ENCODE measurements at regions of chr6 and their contacts with region 1.

Region 1: DNA sequence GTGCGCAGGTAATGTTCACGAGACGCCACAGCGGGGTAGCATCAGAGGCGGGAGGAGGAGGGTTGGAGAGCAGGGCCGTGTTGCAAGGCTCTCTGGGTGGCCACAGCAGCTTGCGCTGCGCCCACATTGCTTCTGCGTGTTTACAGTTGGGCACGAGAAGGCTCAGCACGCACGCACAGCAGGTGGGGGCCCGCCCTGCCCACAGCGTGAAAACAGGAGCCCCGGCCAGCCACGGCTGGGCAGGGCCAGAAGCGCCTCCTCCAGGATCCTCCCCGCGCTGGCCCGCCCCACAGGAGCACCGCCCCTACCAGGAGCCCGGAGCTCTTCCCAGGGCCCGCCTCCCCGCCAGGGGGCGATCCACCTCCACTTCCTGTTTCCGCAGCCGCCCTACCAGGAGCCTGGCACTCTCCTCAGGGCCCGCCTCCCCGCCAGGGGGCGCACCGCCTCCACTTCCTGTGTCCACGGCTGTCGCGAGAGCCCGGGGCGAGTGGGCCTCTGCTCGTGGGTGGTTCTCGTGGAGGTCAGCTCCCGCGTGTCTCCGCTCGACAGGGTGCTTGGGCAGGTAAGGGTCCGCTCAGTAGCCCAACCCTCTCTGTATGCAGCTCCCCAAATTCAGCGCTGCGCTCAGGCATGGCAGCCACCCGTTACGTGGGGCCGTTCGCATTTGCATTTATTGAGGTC is at the start of gene FAM50B:
- DNase-seq: no peak
- H3K4me3 ChIP-seq: peak within 1 kb of the TSS; percentile 59
- CTCF ChIP-seq: peak; percentile 94

Region 2: DNA sequence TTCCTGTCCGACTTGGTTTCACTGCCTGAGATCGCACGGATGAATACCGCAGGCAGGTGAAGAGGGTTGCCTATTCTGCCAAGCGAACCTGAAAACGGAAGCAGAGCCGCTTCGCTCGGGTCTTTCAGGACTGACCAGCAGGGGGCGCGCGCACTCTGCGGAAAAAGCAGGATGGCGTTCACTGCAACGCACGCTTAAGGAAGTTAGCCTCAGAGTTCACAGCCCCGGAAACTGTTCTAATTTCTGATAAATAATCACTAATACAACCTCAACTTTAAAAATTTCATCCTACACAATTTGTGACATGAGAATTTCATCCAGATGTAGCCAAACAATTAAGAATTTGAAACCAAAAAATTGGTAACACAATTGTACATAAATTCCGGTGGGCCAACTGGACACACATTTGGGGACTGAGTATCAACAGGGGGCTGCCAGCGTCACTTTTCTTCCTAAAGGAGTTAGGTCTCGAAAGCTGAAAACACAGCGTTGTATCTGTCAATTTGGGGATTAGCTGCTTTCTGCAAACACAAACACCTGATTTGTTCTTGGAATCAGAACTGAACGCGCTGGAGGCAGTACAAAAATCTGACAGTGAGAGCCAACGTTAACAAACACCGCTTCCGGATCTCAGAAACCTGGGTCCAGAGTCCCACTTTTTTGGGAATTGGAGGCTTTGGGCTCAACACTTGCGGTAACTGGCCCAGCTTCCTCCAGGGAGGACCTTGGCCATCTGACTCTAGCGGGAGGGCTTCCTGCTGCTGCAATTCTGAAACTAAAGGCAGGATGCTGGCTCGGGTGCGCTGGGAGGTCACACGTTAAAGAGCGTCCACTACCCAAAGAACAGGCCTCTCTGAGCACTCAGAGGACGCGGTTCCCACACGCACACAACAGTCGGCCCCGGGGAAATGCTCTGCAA is 106.4 kb before region 1 on chr6:
- CTCF ChIA-PET with region 1: interaction called, 77 read pairs
- POLR2A ChIA-PET with region 1: interaction called, 27 read pairs
- DNase-seq: no peak
- H3K4me3 ChIP-seq: 0 out of 2 replicates have a peak overlapping the region, but pooled peaks have one; percentile 25
- CTCF ChIP-seq: peak; percentile 87

Region 3: DNA sequence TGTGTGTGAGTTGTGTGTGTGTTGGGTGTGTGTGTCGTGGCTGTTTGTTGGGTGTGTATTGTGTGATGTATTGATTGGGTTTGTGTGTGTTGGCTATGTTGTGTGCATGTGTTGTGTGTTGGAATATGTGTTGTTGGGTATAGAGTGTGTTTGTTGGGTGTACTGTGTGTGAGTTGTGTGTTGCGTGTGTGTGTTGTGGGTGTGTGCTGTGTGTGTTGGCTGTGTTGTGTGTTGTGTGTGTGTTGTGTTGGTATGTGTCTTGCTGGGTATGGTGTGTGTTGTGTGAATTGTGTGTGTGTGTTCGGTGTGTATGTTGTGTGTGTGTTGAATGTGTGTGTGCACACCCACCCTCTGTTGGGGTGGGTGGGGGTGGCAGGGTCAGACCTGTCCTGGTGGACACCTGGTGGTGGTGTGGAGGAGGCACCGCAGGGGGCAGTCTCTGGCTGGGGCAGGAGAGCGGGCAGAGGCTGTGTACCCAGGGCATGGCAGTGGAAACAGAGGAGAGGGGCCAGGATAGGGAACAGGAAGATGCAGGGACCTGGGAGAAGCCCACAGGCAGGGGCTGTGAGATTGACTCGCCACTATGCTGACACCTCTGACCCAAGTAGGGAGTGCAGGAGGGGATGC is 72.1 kb before region 1 on chr6:
- CTCF ChIA-PET with region 1: no interaction called
- POLR2A ChIA-PET with region 1: no interaction called
- DNase-seq: no peak
- H3K4me3 ChIP-seq: no peak overlapping the region
- CTCF ChIP-seq: no peak

Region 4: GRCh38 chr6:3835055-3835731 is 13.9 kb before region 1 on chr6:
- CTCF ChIA-PET with region 1: interaction called, 15 read pairs
- POLR2A ChIA-PET with region 1: no interaction called
- DNase-seq: no peak
- H3K4me3 ChIP-seq: no peak overlapping the region
- CTCF ChIP-seq: no peak

Region 5: GRCh38 chr6:3876101-3876500 is 27.0 kb after region 1 on chr6:
- CTCF ChIA-PET with region 1: interaction called, 36 read pairs
- POLR2A ChIA-PET with region 1: interaction called, 3 read pairs
- DNase-seq: no peak
- H3K4me3 ChIP-seq: no peak overlapping the region
- CTCF ChIP-seq: no peak

Region 6: GRCh38 chr6:3913077-3913957 is 64.3 kb after region 1 on chr6:
- CTCF ChIA-PET with region 1: interaction called, 16 read pairs
- POLR2A ChIA-PET with region 1: no interaction called
- DNase-seq: peak; percentile 97
- H3K4me3 ChIP-seq: no peak overlapping the region
- CTCF ChIP-seq: no peak

Region 7: GRCh38 chr6:3960754-3961361 is 111.8 kb after region 1 on chr6:
- CTCF ChIA-PET with region 1: interaction called, 19 read pairs
- POLR2A ChIA-PET with region 1: no interaction called
- DNase-seq: no peak
- H3K4me3 ChIP-seq: no peak overlapping the region
- CTCF ChIP-seq: no peak

Region 8: DNA sequence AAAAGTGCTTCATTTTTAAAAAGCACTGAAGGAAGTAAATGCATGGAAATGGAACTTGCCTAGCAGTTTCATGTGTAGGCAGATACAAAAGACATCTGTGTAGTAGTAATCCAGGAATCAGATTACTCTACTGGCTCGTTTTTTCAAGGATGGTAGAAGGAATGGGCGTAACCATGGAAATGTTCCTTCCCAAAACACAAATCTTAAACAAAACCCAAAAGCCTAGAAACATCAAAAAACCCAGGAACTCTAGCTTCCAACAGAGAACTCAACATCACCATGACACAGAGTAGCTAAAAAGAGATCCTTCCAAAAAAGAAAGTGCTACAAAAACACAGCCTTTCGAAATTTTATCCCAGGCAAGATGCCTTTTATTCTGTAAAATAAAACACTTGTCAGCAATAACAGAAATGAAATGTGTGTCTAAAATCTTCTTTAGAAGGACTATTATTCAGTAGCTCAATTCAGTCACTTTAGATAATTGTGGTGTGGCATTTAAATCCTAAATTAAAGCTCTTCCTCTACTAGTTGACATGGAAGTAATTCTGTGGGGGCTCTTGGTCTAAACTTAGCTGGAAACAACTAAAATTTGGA is 148.2 kb after region 1 on chr6:
- CTCF ChIA-PET with region 1: interaction called, 21 read pairs
- POLR2A ChIA-PET with region 1: no interaction called
- DNase-seq: no peak
- H3K4me3 ChIP-seq: no peak overlapping the region
- CTCF ChIP-seq: no peak